MCF 10A (cell line): ENCODE measurements at regions of chr12 and their contacts with region 1.

Region 1: DNA sequence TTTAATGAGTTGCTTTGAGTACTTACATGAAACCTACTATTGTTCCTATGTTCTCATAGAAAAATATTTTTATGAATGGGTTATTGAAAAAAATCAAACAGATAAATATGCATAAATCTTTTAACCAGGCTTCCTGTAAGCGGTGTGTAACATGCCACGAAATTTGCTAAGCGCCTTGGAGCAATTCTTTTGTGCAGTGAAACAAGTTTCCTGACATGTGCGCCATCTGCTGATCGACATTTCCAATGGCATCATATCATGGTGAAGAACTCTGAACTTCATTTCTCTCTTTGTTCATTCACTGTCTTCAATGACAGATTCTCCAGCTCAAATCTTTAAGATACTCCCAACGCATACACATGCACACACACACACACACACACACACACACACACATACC is 145.6 kb upstream of the NAV3 start:
- DNase-seq: peak; percentile 83
- H3K4me3 Mint-ChIP-seq: no peak overlapping the region
- H3K27ac Mint-ChIP-seq: no peak overlapping the region
- H3K4me1 Mint-ChIP-seq: no peaks in the 10 kb centered on the region
- H3K27me3 Mint-ChIP-seq: no peaks in the 10 kb centered on the region
- CTCF ChIP-seq: peak; percentile 62

Region 2: GRCh38 chr12:76621582-76622024 is 1063.5 kb before region 1 on chr12:
- CTCF ChIA-PET with region 1: no interaction called
- POLR2A ChIA-PET with region 1: no interaction called
- intact Hi-C with region 1: loop called (anchors 5 kb)
- DNase-seq: peak; percentile 83
- H3K4me3 Mint-ChIP-seq: no peak overlapping the region
- H3K27ac Mint-ChIP-seq: no peak overlapping the region
- H3K4me1 Mint-ChIP-seq: peaks cover 5% of the 10 kb centered on the region
- H3K27me3 Mint-ChIP-seq: no peaks in the 10 kb centered on the region
- CTCF ChIP-seq: peak; percentile 91

Region 3: GRCh38 chr12:77049767-77050353 is 635.3 kb before region 1 on chr12:
- CTCF ChIA-PET with region 1: interaction called, 41 read pairs
- POLR2A ChIA-PET with region 1: no interaction called
- intact Hi-C with region 1: loop called (anchors 1 kb)
- DNase-seq: peak; percentile 78
- H3K4me3 Mint-ChIP-seq: no peak overlapping the region
- H3K27ac Mint-ChIP-seq: peak overlapping the region; percentile 53
- H3K4me1 Mint-ChIP-seq: no peaks in the 10 kb centered on the region
- H3K27me3 Mint-ChIP-seq: no peaks in the 10 kb centered on the region
- CTCF ChIP-seq: peak; percentile 68

Region 4: GRCh38 chr12:77152623-77153193 is 532.4 kb before region 1 on chr12:
- CTCF ChIA-PET with region 1: interaction called, 31 read pairs
- POLR2A ChIA-PET with region 1: no interaction called
- intact Hi-C with region 1: loop called (anchors 1 kb)
- DNase-seq: peak; percentile 48
- H3K4me3 Mint-ChIP-seq: no peak overlapping the region
- H3K27ac Mint-ChIP-seq: no peak overlapping the region
- H3K4me1 Mint-ChIP-seq: no peaks in the 10 kb centered on the region
- H3K27me3 Mint-ChIP-seq: no peaks in the 10 kb centered on the region
- CTCF ChIP-seq: peak; percentile 69

Region 5: DNA sequence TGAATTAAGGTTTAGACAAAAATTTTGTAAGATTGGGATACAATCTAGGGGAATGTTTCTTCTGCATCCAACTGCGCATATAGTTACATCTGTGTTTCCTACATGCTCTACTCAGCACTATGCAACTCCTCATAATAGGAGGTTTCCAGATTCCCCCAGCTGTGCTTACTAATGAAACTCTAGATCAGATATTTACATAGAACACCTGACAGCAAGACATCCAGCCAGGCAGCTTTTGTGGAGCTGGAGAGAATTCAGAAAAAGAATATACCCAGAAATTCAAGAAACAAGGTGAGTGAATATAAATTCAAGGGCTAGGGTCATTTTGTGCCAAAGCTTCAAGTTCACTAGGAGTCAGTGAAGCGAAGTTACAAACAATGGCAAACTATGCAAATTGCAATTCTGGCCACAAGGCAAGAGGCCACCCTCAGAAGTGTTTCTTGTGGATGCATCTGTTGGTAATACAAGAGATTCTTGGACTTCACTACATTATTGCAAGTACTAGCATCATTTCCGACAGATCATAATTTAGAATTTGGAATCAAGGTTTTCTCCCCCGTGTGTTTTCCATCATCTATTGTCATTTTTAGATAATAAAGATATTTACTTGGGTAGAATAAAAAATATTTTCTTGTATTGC is 195.7 kb before region 1 on chr12:
- CTCF ChIA-PET with region 1: no interaction called
- POLR2A ChIA-PET with region 1: no interaction called
- intact Hi-C with region 1: no loop called
- DNase-seq: no peak
- H3K4me3 Mint-ChIP-seq: no peak overlapping the region
- H3K27ac Mint-ChIP-seq: no peak overlapping the region
- H3K4me1 Mint-ChIP-seq: no peaks in the 10 kb centered on the region
- H3K27me3 Mint-ChIP-seq: no peaks in the 10 kb centered on the region
- CTCF ChIP-seq: no peak

Region 6: GRCh38 chr12:77531912-77532311 is 153.2 kb before region 1 on chr12:
- CTCF ChIA-PET with region 1: no interaction called
- POLR2A ChIA-PET with region 1: no interaction called
- intact Hi-C with region 1: no loop called
- DNase-seq: no peak
- H3K4me3 Mint-ChIP-seq: no peak overlapping the region
- H3K27ac Mint-ChIP-seq: no peak overlapping the region
- H3K4me1 Mint-ChIP-seq: no peaks in the 10 kb centered on the region
- H3K27me3 Mint-ChIP-seq: no peaks in the 10 kb centered on the region
- CTCF ChIP-seq: no peak

Region 7: DNA sequence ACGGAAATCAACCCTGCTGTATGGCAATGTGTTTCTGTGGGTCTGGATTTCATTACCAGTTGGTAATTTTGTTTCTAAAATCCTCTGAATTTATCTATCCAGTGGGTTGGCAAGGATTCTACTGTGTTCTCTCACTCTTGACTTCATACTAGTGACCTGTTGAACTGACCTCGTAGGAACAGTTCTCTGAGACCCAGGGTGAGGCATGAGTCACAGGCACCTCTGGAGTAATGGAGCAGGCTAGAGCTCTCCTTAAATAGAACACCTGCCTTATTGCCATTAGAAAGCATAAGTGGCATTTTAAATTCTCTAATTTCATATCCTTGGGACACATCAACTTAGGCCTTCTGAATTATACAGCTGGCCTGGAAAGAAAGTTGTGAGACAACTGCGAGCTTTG is 112.7 kb before region 1 on chr12:
- CTCF ChIA-PET with region 1: no interaction called
- POLR2A ChIA-PET with region 1: no interaction called
- intact Hi-C with region 1: no loop called
- DNase-seq: peak; percentile 30
- H3K4me3 Mint-ChIP-seq: no peak overlapping the region
- H3K27ac Mint-ChIP-seq: no peak overlapping the region
- H3K4me1 Mint-ChIP-seq: peaks cover 5% of the 10 kb centered on the region
- H3K27me3 Mint-ChIP-seq: no peaks in the 10 kb centered on the region
- CTCF ChIP-seq: no peak

Region 8: DNA sequence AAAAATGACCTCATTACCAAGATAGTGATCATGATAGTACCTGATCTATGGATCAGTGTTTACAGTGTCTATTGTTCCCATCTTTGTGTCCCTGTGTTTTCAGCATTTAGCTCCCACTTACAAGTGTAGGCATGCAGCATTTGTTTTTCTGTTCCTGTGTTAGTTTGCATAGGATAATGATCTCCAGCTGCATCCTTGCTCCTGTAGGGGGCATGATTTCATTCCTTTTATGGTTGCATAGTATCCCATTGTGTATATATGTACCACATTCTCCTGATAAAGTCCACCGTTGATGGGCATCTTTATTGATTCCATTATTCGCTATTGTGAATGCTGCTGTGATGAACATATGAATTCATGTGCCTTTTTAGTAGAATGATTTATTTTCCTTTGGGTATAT is 69.8 kb before region 1 on chr12:
- CTCF ChIA-PET with region 1: interaction called, 12 read pairs
- POLR2A ChIA-PET with region 1: interaction called, 4 read pairs
- intact Hi-C with region 1: loop called (anchors 1 kb)
- DNase-seq: peak; percentile 49
- H3K4me3 Mint-ChIP-seq: no peak overlapping the region
- H3K27ac Mint-ChIP-seq: no peak overlapping the region
- H3K4me1 Mint-ChIP-seq: peaks cover 5% of the 10 kb centered on the region
- H3K27me3 Mint-ChIP-seq: no peaks in the 10 kb centered on the region
- CTCF ChIP-seq: peak; percentile 48